Endothelial cell of umbilical vein (primary cell): ENCODE measurements at regions of chr17 and their contacts with region 1.

Region 1: GRCh38 chr17:45135192-45135977 is at the start of gene ACBD4:
- DNase-seq: peak; percentile 98
- H3K4me3 ChIP-seq: peak within 1 kb of the TSS; percentile 3 to 69 (median 53)
- H3K27ac ChIP-seq: peak within 1 kb of the TSS; percentile 14
- H3K4me1 ChIP-seq: peaks cover 17% of the 10 kb centered on the region
- H3K27me3 ChIP-seq: no peaks in the 10 kb centered on the region
- CTCF ChIP-seq: peak; percentile 100
- POLR2A ChIP-seq: peak; percentile 50
- total RNA-seq, gene ACBD4: 6.7 and 7.5 TPM in 2 replicates

Region 2: GRCh38 chr17:44775136-44775837 is 360.1 kb before region 1 on chr17:
- CTCF ChIA-PET with region 1: interaction called, 22 read pairs
- POLR2A ChIA-PET with region 1: no interaction called
- dilution Hi-C with region 1: no loop called
- intact Hi-C with region 1: loop called (anchors 1 kb)
- DNase-seq: peak; percentile 98
- H3K4me3 ChIP-seq: peak overlapping the region; percentile 9 to 51 (median 20)
- H3K27ac ChIP-seq: no peak overlapping the region
- H3K4me1 ChIP-seq: peaks cover 5% of the 10 kb centered on the region
- H3K27me3 ChIP-seq: no peaks in the 10 kb centered on the region
- CTCF ChIP-seq: no peak
- POLR2A ChIP-seq: no peak

Region 3: DNA sequence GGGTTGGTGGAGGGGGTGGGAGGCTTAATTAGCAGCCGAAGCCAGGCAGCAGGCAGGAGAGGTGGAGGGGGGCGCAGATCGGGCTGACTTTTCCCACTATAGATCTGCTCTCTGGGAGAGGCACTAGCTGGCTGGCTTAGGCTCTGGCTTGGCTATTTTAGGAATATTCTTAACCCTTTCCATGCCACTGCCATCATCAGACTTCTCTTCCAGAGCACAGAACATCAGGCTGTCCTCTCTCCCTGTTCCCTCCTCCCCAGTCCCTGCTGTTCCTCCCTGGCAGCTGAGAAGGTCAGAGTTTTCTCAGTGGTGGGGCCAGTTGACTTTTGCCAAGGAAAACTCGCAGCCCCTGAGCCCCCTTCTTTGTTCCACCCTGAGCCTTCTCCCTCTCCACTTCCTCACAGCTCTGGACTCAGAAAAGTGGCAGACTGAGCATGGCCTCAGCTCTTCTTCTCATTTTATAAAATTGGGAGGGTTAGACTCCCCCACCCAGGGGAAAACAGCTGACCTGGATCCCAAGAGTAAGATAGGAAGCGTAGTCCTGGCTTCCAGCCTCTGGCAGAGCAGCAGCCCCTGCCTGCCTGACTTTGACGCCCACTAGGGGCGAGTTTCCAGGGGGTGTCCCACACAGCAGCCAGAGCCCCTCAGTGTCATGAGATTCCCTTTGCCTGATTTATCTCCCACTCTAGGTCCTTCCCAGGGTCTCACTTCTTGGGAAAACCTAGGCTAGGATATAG is 157.4 kb before region 1 on chr17:
- CTCF ChIA-PET with region 1: no interaction called
- POLR2A ChIA-PET with region 1: no interaction called
- dilution Hi-C with region 1: no loop called
- intact Hi-C with region 1: no loop called
- DNase-seq: no peak
- H3K4me3 ChIP-seq: no peak overlapping the region
- H3K27ac ChIP-seq: no peak overlapping the region
- H3K4me1 ChIP-seq: peaks cover 15% of the 10 kb centered on the region
- H3K27me3 ChIP-seq: peaks cover 0 to 14% of the 10 kb centered on the region in 2 experiments
- CTCF ChIP-seq: no peak
- POLR2A ChIP-seq: no peak

Region 4: DNA sequence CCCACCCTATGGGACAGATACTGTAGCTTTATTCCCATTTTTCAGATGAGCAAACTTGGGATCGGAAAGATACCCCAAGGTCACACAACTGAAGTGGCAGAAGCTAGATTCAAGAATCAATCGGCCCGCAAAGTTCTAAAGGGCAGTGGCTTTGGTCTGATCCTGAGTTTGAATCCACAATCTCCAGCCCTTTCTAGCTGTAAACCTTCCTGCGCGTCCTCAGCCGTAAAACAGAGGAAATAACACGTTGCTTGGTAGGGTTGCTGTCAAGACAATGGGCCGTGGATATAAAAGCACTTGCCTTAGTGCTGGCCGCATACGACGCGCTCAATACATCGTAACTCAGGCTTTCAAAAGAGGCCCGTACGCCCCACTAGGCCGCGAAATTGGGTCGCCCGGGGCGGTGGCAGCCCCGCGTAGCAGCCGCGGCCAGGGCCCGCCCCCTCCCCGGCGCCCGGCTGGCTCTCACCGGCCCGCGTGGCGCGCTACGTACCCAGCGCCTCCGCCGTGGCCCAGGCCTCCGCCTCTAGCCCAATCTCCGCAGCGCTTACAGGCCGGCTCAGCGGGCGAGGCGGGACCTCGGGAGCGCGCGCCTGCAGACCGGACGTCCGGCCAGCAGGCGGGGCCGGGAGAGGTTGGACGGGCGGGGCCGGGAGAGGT is 84.2 kb before region 1 on chr17 and contains the start of gene DCAKD:
- CTCF ChIA-PET with region 1: interaction called, 10 read pairs
- POLR2A ChIA-PET with region 1: no interaction called
- dilution Hi-C with region 1: no loop called
- intact Hi-C with region 1: loop called (anchors 1 kb)
- DNase-seq: peak; percentile 95
- H3K4me3 ChIP-seq: peak within 1 kb of the TSS; percentile 69 to 97 (median 95)
- H3K27ac ChIP-seq: peak within 1 kb of the TSS; percentile 97
- H3K4me1 ChIP-seq: peaks cover 16% of the 10 kb centered on the region
- H3K27me3 ChIP-seq: no peaks in the 10 kb centered on the region
- CTCF ChIP-seq: no peak
- POLR2A ChIP-seq: peak; percentile 94
- total RNA-seq, gene DCAKD: 29.0 and 30.8 TPM in 2 replicates

Region 5: DNA sequence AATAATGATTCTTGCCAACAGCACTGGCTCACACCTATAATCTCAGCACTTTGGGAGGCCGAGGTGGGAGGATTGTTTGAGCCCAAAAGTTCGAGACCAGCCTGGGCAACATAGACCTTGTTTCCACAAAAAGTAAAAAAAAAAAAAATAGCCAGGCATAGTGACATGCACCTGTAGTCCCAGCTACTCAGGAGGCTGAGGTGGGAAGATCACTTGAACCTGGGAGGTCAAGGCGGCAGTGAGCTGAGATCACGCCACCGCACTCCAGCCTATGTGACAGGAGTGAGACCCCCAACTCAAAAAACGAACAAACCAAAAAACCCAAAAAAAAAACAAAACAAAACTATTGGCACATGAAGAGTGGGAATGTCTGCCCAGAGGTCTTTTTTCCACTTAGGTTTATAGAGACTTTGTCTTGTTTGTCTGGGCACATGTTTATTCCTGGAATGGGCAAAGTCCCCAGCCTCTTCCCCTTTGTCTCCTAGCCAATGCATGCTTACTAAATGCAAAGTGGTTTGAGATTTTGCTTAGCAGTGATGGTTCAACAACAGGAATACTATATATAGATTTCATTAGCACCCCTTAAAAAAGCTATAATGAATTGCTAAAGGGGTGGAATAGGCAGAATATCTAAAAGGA is 48.4 kb before region 1 on chr17:
- CTCF ChIA-PET with region 1: no interaction called
- POLR2A ChIA-PET with region 1: no interaction called
- dilution Hi-C with region 1: no loop called
- intact Hi-C with region 1: no loop called
- DNase-seq: no peak
- H3K4me3 ChIP-seq: no peak overlapping the region
- H3K27ac ChIP-seq: no peak overlapping the region
- H3K4me1 ChIP-seq: peaks cover 4% of the 10 kb centered on the region
- H3K27me3 ChIP-seq: no peaks in the 10 kb centered on the region
- CTCF ChIP-seq: no peak
- POLR2A ChIP-seq: no peak

Region 6: DNA sequence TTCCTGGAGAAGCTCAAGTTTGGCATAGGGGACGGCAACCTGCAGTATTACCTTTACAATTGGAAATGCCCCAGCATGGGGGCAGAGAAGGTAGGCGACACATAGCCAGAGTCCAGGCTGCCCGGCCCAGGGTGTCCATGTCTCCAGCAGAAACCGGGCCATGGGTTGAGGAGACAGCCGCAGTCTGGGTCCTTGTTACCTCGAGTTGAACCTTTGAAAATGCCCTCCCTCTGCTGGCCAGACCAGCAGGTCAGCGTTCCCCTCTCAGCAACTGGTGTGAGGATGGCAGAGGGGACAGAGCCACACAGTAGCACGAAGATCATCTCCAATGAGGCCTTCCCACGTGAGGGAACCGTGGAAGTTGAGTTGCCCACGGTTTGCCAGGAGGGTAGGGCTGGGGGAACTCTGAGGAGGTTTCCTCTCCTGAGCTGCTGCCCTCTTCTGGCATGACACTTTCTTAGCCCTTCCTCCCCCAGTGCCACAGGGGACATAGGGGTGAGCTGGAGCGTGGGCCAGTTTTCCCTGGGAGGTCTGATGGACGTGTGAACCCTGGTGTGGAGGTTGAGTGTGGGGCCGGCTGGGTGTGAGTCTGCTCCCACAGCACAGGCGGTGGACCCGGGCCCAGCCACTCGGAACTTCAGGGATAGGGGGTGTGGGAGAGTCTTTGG is 30.3 kb before region 1 on chr17:
- CTCF ChIA-PET with region 1: interaction called, 61 read pairs
- POLR2A ChIA-PET with region 1: no interaction called
- dilution Hi-C with region 1: no loop called
- intact Hi-C with region 1: loop called (anchors 1 kb)
- DNase-seq: no peak
- H3K4me3 ChIP-seq: no peak overlapping the region
- H3K27ac ChIP-seq: no peak overlapping the region
- H3K4me1 ChIP-seq: no peaks in the 10 kb centered on the region
- H3K27me3 ChIP-seq: no peaks in the 10 kb centered on the region
- CTCF ChIP-seq: no peak
- POLR2A ChIP-seq: no peak

Region 7: DNA sequence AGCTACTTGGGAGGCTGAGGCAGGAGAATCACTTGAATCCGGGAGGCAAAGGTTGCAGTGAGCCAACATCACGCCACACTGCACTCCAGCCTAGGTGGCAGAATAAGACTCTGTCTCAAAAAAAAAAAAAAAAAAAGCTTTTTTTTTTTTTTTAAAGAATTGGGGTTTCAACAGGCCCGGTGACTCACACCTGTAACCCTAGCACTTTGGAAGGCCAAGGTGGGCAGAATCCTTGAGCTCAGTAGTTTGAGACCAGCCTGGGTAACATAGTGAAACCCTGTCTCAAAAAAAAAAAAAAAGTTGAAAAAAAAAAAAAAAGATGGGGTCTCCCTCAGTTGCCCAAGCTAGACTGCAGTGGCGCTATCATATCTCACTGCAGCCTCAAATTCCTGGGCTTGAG is 19.6 kb after region 1 on chr17:
- CTCF ChIA-PET with region 1: interaction called, 393 read pairs
- POLR2A ChIA-PET with region 1: interaction called, 58 read pairs
- dilution Hi-C with region 1: no loop called
- intact Hi-C with region 1: no loop called
- DNase-seq: no peak
- H3K4me3 ChIP-seq: no peak overlapping the region
- H3K27ac ChIP-seq: no peak overlapping the region
- H3K4me1 ChIP-seq: peaks cover 38% of the 10 kb centered on the region
- H3K27me3 ChIP-seq: no peaks in the 10 kb centered on the region
- CTCF ChIP-seq: no peak
- POLR2A ChIP-seq: no peak

Region 8: DNA sequence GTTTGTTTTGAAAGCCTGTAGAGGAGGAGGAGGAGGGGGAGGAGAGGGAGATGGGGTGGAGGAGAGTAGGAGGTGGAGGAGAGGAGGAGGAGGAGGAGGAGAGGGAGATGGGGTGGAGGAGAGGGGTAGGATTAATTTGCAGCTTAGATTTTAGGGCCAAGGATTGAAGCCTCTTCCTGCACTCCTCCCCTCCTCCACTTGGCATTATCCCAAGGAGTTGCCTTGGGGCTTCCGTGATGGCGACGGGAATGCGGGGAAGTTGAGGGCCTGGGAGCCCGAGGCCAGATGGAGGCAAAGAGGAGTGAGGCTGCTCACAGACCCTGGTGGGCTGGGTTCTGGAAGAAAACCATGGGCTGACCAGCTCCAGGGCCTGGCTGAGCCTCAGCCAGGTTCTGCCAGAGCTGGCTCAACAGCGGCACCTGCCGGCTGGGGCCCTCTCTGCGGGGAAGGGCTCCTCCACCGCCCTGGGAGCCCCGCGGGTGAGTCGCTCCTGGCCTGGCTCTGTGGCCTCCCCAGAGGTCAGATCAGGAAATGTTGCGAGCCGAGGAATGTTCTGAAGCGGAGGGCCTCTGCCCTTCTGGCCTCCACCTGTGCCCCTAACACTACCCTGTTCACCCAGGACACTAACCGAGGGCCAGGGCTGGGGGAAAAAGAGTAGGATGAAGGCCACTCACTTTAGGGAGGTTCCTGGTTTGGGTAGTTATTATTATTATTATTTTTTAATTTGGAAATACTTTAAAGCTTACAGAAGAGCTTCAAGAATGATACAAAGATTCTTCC is 62.4 kb after region 1 on chr17:
- CTCF ChIA-PET with region 1: interaction called, 476 read pairs
- POLR2A ChIA-PET with region 1: interaction called, 8 read pairs
- dilution Hi-C with region 1: no loop called
- intact Hi-C with region 1: loop called (anchors 1 kb)
- DNase-seq: peak; percentile 86
- H3K4me3 ChIP-seq: no peak overlapping the region
- H3K27ac ChIP-seq: no peak overlapping the region
- H3K4me1 ChIP-seq: peaks cover 2% of the 10 kb centered on the region
- H3K27me3 ChIP-seq: no peaks in the 10 kb centered on the region
- CTCF ChIP-seq: peak; percentile 99 to 100
- POLR2A ChIP-seq: no peak

Region 9: DNA sequence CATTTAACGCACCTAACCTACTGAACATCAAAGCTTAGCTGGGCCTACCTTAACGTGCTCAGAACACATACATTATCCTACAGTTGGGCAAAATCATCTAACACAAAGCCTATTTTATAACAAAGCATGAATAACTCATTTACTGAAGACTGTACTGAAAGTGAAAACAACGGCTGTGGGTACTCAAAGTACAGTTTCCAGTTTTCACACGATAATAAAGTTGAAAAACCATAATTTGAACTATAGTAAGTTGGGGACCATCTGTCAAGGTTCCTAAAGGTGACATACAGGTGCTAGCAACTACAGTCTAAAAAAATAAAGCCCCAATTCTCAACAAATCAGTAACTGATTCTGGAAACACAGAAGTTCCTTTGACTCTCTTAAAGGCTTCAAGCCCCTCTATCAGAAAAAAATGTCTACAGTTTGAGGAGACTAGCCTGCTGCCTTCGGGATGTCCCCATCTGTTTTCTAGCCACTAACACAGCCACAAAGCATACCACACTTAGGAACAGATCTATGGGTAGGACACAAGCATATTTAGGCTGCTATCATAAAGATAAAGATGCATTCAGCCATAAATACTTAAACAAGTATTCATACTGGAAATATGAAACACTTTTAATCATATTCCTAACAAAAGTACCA is 986.6 kb after region 1 on chr17:
- CTCF ChIA-PET with region 1: no interaction called
- POLR2A ChIA-PET with region 1: no interaction called
- dilution Hi-C with region 1: no loop called
- intact Hi-C with region 1: no loop called
- DNase-seq: no peak
- H3K4me3 ChIP-seq: no peak overlapping the region
- H3K27ac ChIP-seq: no peak overlapping the region
- H3K4me1 ChIP-seq: peaks cover 5% of the 10 kb centered on the region
- H3K27me3 ChIP-seq: no peaks in the 10 kb centered on the region
- CTCF ChIP-seq: no peak
- POLR2A ChIP-seq: no peak